ENCODE measurements at regions of chr11 and their contacts with region 1.

Region 1: GRCh38 chr11:72924568-72925190 is 110.5 kb downstream of the ATG16L2 start:
- DNase-seq: peak; percentile 77
- H3K4me3 ChIP-seq: no peak overlapping the region
- H3K27ac ChIP-seq: no peak overlapping the region
- H3K4me1 ChIP-seq: peaks cover 4% of the 10 kb centered on the region
- H3K27me3 ChIP-seq: no peaks in the 10 kb centered on the region
- CTCF ChIP-seq: peak; percentile 29 to 32
- POLR2A ChIP-seq: no peak

Region 2: GRCh38 chr11:72939031-72939430 is 14.4 kb after region 1 on chr11:
- CTCF ChIA-PET with region 1: interaction called, 21 read pairs
- POLR2A ChIA-PET with region 1: no interaction called
- dilution Hi-C with region 1: no loop called
- intact Hi-C with region 1: no loop called
- DNase-seq: peak; percentile 73
- H3K4me3 ChIP-seq: no peak overlapping the region
- H3K27ac ChIP-seq: no peak overlapping the region
- H3K4me1 ChIP-seq: peaks cover 29% of the 10 kb centered on the region
- H3K27me3 ChIP-seq: no peaks in the 10 kb centered on the region
- CTCF ChIP-seq: no peak
- POLR2A ChIP-seq: no peak

Region 3: DNA sequence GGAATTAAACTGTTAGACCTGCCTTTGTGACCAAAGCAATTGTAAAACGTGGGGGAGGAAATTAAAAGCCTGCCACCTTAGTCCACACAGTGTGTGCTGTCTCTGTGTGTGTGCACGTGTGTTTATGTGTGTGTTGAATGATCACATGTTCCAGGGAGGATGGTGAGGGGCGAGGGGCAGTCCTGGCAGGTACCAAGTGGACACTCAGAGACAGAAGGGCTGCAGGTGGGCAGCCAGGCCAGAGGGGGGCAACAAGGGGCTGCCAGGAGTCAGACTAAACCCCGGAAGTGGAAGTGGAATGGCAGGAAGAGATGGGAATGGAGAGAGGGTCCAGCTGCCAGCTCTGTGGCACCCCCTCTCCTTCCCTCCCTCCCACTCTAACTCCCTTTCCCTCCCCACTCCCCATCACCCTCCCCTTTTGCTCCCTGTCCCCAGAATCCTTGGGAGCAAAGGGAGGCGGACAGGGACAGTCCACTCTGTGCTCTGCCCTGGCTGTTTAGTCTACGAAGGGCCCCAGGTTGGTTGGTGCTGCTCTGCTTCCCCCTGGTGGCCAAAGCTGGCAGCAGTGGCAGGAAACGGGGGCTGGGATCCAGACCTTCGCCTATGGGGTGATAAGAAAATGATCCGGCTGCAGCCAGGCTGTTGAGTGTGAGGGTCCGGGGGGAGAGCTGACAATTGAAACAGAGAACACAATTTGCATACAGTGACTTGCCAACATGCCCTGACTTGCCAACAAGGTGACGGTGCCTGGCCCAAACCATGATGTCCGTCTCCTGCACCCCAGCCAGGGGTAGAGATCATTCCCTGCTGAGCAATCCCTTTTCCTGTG is 317.8 kb after region 1 on chr11:
- CTCF ChIA-PET with region 1: no interaction called
- POLR2A ChIA-PET with region 1: no interaction called
- dilution Hi-C with region 1: no loop called
- intact Hi-C with region 1: loop called (anchors 1 kb)
- DNase-seq: peak; percentile 84
- H3K4me3 ChIP-seq: no peak overlapping the region
- H3K27ac ChIP-seq: no peak overlapping the region
- H3K4me1 ChIP-seq: peaks cover 11% of the 10 kb centered on the region
- H3K27me3 ChIP-seq: no peaks in the 10 kb centered on the region
- CTCF ChIP-seq: peak; percentile 88 to 89
- POLR2A ChIP-seq: no peak

Measured in endothelial cell of umbilical vein (primary cell).